ENCODE measurements at regions of chr13 and their contacts with region 1.

Region 1: DNA sequence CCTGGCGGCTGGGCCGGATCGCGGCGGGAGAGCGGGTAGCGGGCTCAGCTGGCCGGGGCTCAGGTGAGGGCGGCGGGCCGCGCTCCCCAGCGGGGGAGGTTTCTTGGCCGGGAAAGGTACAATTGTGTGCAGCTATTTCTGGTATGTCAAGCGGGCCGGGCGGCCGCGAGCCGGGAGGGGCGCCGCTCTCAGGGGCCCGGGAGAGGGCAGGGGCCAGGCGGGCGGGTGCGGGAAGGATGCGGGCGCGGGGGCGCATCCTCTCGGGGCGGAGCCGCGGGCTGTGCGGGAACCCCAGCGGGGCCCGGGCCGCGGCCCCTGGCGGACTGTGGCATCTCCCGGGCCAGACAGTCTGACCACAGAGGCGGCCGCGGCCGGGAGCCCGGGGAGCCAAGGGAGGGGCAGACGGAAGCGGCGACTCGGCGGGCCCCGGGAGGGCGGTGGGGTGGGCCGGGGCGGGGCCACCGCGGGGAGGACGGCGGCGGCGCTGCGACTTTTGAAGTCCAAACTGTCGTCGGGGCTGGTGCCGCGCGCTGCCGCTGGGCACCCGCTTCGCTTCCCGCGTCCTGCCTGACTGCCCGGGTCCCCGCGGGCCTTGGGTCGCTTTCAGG is at the start of gene LMO7:
- DNase-seq: no peak
- ATAC-seq: peak; percentile 74
- H3K4me3 ChIP-seq: peak within 1 kb of the TSS; percentile 86
- H3K27ac ChIP-seq: peak within 1 kb of the TSS; percentile 22; the same call in 1 of the 2 replicates
- H3K4me1 ChIP-seq: no peaks in the 10 kb centered on the region; the same call in 1 of the 2 replicates
- H3K27me3 ChIP-seq: no peaks in the 10 kb centered on the region
- CTCF ChIP-seq: no peak
- EP300 ChIP-seq: no peak
- POLR2A ChIP-seq: peak; percentile 77
- RAD21 ChIP-seq: no peak
- polyA plus RNA-seq, gene LMO7: 12.7 to 13.2 TPM

Region 2: DNA sequence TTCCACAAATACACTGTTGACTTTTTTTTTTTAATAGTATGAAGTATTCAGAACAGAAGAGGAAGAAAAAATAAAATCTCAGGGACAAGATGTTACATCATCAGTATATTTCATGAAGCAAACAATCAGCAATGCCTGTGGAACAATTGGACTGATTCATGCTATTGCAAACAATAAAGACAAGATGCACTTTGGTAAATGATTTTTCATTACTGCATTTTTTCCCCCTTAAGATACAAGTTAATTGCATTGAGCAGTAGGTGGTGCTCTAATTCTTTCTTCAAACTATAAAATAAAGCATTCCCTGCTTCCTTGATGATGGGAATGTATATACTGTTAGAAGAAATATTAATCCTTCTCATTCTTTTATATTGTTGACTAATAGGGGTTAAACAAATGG is 69.3 kb before region 1 on chr13:
- CTCF ChIA-PET with region 1: no interaction called
- POLR2A ChIA-PET with region 1: no interaction called
- RAD21 ChIA-PET with region 1: no interaction called
- SMC1A ChIA-PET with region 1: no interaction called
- in situ Hi-C with region 1: no loop called
- intact Hi-C with region 1: loop called (anchors 5 kb)
- DNase-seq: no peak
- ATAC-seq: no peak
- H3K4me3 ChIP-seq: no peak overlapping the region
- H3K27ac ChIP-seq: no peak overlapping the region
- H3K4me1 ChIP-seq: no peaks in the 10 kb centered on the region
- H3K27me3 ChIP-seq: no peaks in the 10 kb centered on the region
- CTCF ChIP-seq: peak; percentile 15 to 47 (median 21); a peak in 4 of 6 replicates
- EP300 ChIP-seq: no peak
- POLR2A ChIP-seq: no peak
- RAD21 ChIP-seq: peak; percentile 48; the same call in 1 of the 2 replicates

Region 3: GRCh38 chr13:75647126-75647784 is 11.3 kb after region 1 on chr13:
- CTCF ChIA-PET with region 1: interaction called, 4 read pairs
- POLR2A ChIA-PET with region 1: interaction called, 9 read pairs
- RAD21 ChIA-PET with region 1: interaction called, 3 read pairs
- SMC1A ChIA-PET with region 1: interaction called, 10 read pairs
- in situ Hi-C with region 1: no loop called
- intact Hi-C with region 1: no loop called
- DNase-seq: peak; percentile 38
- ATAC-seq: peak; percentile 92
- H3K4me3 ChIP-seq: peak overlapping the region; percentile 39; the same call in 1 of the 2 replicates
- H3K27ac ChIP-seq: peak overlapping the region; percentile 76
- H3K4me1 ChIP-seq: peaks cover 24% of the 10 kb centered on the region
- H3K27me3 ChIP-seq: no peaks in the 10 kb centered on the region
- CTCF ChIP-seq: no peak
- EP300 ChIP-seq: peak in 1 of 2 experiments; percentile 66; a peak in 2 of 4 replicates
- POLR2A ChIP-seq: no peak
- RAD21 ChIP-seq: no peak

Region 4: GRCh38 chr13:76148926-76149325 is 513.0 kb after region 1 on chr13:
- CTCF ChIA-PET with region 1: no interaction called
- POLR2A ChIA-PET with region 1: no interaction called
- RAD21 ChIA-PET with region 1: no interaction called
- SMC1A ChIA-PET with region 1: no interaction called
- in situ Hi-C with region 1: no loop called
- intact Hi-C with region 1: no loop called
- DNase-seq: no peak
- ATAC-seq: no peak
- H3K4me3 ChIP-seq: no peak overlapping the region
- H3K27ac ChIP-seq: no peak overlapping the region
- H3K4me1 ChIP-seq: no peaks in the 10 kb centered on the region
- H3K27me3 ChIP-seq: no peaks in the 10 kb centered on the region
- CTCF ChIP-seq: no peak
- EP300 ChIP-seq: no peak
- POLR2A ChIP-seq: no peak
- RAD21 ChIP-seq: no peak

Measured in GM12878 (cell line).